PC-9 (cell line): ENCODE measurements at regions of chr4 and their contacts with region 1.

Region 1: DNA sequence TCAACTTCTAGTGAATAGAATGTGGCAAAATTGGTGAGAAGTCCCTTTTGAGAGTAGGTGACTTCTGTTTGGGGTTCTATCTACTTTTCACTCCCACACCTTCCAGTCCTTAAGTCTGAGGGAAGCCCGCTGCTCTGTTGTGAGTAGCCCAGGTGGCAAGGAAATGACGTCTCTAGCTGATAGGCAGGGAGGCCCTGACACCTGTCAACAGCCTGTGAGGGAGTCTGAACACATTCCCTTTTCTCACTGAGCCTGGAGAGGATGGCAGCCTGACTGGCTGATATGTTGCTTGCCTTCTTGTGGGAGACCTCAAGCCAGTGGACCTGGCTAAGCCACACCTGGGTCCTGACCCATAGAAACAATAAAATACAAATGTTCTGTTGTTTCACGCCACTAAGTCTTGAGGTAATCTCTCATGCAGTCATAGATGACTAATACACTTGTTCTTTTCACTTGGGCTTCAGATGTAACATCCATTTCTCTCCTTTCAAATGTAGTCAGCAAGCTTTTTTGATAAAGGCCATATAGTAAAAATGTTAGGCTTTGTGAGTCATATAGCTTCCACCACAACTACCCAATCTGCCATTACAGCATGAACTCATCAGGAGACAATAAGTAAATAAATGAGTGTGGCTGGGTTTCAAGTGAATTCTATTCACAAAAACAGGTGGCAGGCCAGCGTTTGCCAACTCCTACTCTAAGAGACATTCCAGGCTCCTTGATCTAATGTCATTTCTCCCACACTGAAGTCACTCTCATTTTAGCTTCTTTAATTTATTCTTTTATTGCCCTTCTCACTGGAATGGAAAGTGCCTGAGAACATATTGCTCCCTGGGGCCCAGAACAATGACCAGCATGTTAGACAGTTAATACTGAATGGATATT is 265.1 kb upstream of the MAD2L1 start:
- DNase-seq: no peak
- H3K4me3 ChIP-seq: no peak overlapping the region
- H3K27ac ChIP-seq: no peak overlapping the region
- H3K4me1 ChIP-seq: no peaks in the 10 kb centered on the region
- H3K27me3 ChIP-seq: no peaks in the 10 kb centered on the region
- CTCF ChIP-seq: no peak

Region 2: DNA sequence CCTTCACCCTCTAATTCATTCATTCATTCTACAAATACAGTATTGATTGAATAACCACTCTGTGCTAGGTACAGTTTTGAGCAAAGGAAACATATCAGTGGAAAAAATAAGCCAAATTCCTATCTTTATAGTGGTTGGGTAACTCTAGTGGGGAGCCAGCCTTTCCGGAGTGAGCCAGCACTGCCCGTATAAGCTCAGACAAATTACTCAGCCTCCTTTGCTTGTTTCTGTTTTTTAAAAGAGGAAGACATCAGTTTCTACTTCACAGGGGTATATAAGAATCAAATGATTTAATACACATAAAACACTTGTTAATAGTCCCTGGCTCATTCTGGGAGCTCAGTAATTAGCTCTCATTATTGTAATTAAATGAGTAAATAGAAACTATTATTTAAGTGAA is 26.9 kb before region 1 on chr4:
- CTCF ChIA-PET with region 1: no interaction called
- POLR2A ChIA-PET with region 1: no interaction called
- intact Hi-C with region 1: loop called (anchors 1 kb)
- DNase-seq: no peak
- H3K4me3 ChIP-seq: no peak overlapping the region
- H3K27ac ChIP-seq: no peak overlapping the region
- H3K4me1 ChIP-seq: no peaks in the 10 kb centered on the region
- H3K27me3 ChIP-seq: no peaks in the 10 kb centered on the region
- CTCF ChIP-seq: no peak